ENCODE measurements at regions of chr10 and their contacts with region 1.

Region 1: DNA sequence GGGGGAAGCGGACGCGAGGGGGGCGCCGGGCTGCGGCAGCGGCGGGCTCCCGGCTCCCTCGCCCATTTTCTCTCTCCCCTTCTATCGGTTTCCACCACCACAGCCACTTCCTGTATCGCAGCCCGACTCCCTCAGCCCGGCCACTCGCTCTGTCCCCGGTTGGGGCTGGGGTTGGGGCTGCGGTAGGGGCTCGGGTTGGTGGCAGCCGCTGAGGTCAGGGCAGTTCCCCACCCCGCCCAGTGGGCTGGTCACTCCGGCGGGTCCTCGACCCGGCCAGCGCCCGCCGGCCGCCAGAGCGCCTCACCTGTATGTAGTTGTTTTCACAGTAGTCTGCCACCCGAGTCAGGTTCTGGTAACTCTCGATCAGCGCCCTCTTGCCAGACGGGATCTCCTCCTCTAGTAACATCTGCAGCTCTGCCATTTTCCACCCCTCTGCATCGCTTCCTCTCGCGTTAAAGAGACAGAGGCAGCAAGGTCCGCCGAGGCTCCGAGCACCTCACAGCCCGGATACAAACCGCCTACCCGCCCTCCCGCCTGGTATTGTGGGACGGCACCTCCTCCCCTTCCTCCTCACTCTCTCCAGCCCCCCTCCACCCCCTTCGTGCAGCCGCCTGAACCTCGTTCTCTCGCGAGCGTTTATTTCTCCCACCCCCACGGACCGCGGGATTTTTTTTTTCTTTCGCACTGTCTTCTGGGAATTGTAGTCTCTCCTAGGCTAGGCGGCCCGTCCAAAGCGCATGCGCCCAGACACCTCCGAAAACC is at the start of gene ABI1:
- DNase-seq: peak; percentile 97
- H3K4me3 Mint-ChIP-seq: peak within 1 kb of the TSS; percentile 97
- H3K27ac Mint-ChIP-seq: peak within 1 kb of the TSS; percentile 98
- H3K4me1 Mint-ChIP-seq: peaks cover 30% of the 10 kb centered on the region
- H3K27me3 Mint-ChIP-seq: peaks cover 13% of the 10 kb centered on the region
- total RNA-seq, gene ABI1: 50.1 and 52.7 TPM in 2 replicates

Region 2: GRCh38 chr10:26486991-26487850 is 373.4 kb before region 1 on chr10:
- intact Hi-C with region 1: loop called (anchors 1 kb)
- DNase-seq: peak; percentile 65
- H3K4me3 Mint-ChIP-seq: peak overlapping the region; percentile 76
- H3K27ac Mint-ChIP-seq: peak overlapping the region; percentile 98
- H3K4me1 Mint-ChIP-seq: peaks cover 52% of the 10 kb centered on the region
- H3K27me3 Mint-ChIP-seq: no peaks in the 10 kb centered on the region

Region 3: DNA sequence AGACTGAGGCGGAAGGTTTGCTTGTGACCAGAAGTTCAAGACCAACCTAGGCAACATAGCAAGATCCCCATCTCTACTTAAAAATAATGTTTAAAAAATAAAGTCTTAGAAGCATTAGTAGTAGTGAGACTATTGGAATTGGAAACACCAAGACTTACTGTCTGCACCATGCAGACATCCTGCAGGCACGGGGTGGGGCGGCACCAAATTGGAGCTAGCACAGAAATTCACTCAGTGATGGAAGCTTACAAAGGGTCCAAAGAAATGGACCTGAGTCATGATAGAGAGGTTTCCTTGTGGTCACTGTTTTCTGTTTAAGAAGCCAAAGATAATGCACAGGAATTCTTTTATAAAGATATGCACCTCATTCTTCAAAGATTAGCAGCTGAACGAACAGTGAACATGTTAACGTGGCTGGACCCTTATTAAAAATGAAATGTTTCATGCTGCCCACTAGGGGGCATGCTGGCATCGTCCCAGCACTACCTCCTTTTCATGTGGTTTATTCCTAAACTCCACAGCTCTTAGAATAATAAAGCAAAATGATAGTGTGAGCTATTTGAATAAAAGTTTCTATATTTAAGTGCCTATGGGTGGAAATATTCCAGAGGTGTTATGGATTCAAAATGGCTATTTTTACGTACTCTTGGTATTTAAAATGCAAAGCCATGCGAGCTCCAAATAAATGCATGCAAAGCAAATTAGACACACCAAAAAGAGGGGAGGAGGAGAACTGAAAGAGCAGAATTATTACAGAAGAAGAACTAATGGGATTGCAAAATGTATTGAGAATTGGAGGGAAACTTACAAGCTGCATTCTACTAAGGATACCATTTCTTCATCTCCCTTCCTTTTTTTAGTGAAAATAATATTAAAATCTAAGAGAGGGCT is 134.5 kb before region 1 on chr10:
- intact Hi-C with region 1: loop called (anchors 1 kb)
- DNase-seq: no peak
- H3K4me3 Mint-ChIP-seq: no peak overlapping the region
- H3K27ac Mint-ChIP-seq: peak overlapping the region; percentile 25
- H3K4me1 Mint-ChIP-seq: peaks cover 14% of the 10 kb centered on the region
- H3K27me3 Mint-ChIP-seq: no peaks in the 10 kb centered on the region

Region 4: DNA sequence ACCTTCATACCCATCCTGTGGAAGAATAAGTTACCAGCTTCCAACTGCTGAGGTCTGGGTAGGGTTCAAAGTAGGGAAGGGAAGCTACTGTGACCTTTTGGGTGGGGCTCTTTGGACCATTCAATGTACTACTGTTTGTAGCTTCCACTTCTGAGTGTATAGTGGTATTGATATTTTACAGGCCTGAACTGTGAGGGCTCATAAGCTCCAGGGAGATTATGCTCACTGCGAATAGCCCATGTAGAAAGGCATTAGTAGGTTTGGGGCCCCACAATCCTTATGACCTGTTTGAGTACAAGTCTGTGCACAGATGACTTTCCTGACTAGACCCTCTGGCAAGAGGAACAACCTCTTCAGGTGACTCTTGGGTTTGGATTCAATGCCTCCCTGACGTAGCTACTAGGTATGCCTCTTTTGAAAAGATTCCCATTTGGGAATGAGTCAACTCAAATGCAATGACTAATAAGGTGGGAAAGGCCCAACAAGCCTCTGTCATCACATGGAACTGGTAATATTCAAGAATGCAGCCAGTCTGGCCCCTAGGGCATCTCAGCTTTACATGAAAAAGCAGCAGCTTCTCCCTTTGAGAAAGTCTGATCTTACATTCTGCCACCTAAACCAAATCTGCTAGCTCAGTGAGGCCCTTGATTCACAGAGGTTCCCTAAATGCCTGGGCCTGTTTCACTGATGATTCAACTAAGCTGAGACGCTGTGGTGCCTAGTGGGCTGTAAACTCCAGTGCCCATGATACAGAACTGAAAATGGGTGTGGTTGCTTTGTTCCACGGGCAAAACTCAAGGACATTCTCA is 79.6 kb before region 1 on chr10:
- intact Hi-C with region 1: loop called (anchors 5 kb)
- DNase-seq: no peak
- H3K4me3 Mint-ChIP-seq: no peak overlapping the region
- H3K27ac Mint-ChIP-seq: peak overlapping the region; percentile 51
- H3K4me1 Mint-ChIP-seq: peaks cover 45% of the 10 kb centered on the region
- H3K27me3 Mint-ChIP-seq: no peaks in the 10 kb centered on the region

Region 5: GRCh38 chr10:26839966-26840627 is 20.5 kb before region 1 on chr10:
- intact Hi-C with region 1: loop called (anchors 2 kb)
- DNase-seq: no peak
- H3K4me3 Mint-ChIP-seq: no peak overlapping the region
- H3K27ac Mint-ChIP-seq: peak overlapping the region; percentile 65
- H3K4me1 Mint-ChIP-seq: peaks cover 42% of the 10 kb centered on the region
- H3K27me3 Mint-ChIP-seq: no peaks in the 10 kb centered on the region

Region 6: DNA sequence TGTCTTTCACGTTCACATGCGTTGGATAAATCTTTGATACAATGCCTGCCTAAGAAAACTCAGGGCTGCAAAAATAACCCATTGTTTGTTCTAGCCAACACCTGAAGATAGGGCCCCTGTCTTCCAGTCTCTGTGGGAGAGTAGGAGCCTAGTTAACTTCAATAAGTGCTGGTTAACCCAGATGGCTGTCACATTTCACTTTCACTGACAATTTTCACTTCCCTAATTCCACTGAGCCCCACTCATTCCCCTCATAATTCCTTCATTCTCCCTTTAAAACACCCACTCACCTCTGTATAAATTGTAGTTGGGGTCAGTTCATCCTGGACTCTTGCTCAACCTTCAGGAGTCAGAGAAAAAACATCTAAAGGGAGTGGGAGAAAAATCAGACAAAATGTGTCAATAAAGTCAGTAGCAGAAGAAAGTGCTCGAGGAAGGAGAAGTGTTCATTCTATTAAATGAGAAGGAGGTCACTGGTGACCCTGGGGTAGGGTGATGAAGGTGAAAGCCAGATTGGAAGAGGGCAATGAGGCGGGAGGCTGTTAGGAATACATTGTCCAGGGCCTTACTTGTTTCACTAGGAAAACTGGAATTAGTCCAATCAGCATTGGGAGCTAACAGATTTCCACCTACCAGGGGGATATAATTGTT is 51.3 kb after region 1 on chr10:
- intact Hi-C with region 1: no loop called
- DNase-seq: no peak
- H3K4me3 Mint-ChIP-seq: no peak overlapping the region
- H3K27ac Mint-ChIP-seq: no peak overlapping the region
- H3K4me1 Mint-ChIP-seq: no peaks in the 10 kb centered on the region
- H3K27me3 Mint-ChIP-seq: peaks cover 3% of the 10 kb centered on the region

Region 7: GRCh38 chr10:27099916-27100812 is 239.5 kb after region 1 on chr10 and contains the start of gene ANKRD26:
- intact Hi-C with region 1: loop called (anchors 1 kb)
- DNase-seq: peak; percentile 95
- H3K4me3 Mint-ChIP-seq: peak within 1 kb of the TSS; percentile 85
- H3K27ac Mint-ChIP-seq: peak within 1 kb of the TSS; percentile 91
- H3K4me1 Mint-ChIP-seq: peaks cover 34% of the 10 kb centered on the region
- H3K27me3 Mint-ChIP-seq: peaks cover 2% of the 10 kb centered on the region
- total RNA-seq, gene ANKRD26: 5.5 and 6.5 TPM in 2 replicates

Region 8: DNA sequence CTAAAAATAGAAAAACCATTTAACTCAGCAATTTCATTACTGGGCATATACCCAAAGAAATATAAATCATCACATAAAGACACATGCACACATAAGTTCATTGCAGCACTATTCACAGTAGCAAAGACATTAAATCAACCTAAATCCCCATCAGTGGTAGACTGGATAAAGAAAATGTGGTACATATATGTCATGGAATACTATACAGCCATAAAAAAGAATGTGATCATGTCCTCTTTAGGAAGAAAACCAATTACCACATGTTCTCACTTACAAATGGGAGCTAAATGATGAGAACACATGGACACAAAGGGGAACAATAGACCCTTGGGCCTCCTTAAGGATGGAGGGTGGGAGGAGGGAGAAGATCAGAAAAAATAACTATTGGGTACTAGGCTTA is 416.0 kb after region 1 on chr10:
- intact Hi-C with region 1: no loop called
- DNase-seq: no peak
- H3K4me3 Mint-ChIP-seq: no peak overlapping the region
- H3K27ac Mint-ChIP-seq: no peak overlapping the region
- H3K4me1 Mint-ChIP-seq: no peaks in the 10 kb centered on the region
- H3K27me3 Mint-ChIP-seq: peaks cover 54% of the 10 kb centered on the region

Region 9: GRCh38 chr10:28532383-28533175 is 1672.0 kb after region 1 on chr10 and contains the start of gene WAC:
- intact Hi-C with region 1: loop called (anchors 2 kb)
- DNase-seq: peak; percentile 95
- H3K4me3 Mint-ChIP-seq: peak within 1 kb of the TSS; percentile 99
- H3K27ac Mint-ChIP-seq: peak within 1 kb of the TSS; percentile 100
- H3K4me1 Mint-ChIP-seq: peaks cover 42% of the 10 kb centered on the region
- H3K27me3 Mint-ChIP-seq: no peaks in the 10 kb centered on the region
- total RNA-seq, gene WAC: 126 and 130 TPM in 2 replicates